ENCODE measurements at regions of chr12 and their contacts with region 1.

Region 1: DNA sequence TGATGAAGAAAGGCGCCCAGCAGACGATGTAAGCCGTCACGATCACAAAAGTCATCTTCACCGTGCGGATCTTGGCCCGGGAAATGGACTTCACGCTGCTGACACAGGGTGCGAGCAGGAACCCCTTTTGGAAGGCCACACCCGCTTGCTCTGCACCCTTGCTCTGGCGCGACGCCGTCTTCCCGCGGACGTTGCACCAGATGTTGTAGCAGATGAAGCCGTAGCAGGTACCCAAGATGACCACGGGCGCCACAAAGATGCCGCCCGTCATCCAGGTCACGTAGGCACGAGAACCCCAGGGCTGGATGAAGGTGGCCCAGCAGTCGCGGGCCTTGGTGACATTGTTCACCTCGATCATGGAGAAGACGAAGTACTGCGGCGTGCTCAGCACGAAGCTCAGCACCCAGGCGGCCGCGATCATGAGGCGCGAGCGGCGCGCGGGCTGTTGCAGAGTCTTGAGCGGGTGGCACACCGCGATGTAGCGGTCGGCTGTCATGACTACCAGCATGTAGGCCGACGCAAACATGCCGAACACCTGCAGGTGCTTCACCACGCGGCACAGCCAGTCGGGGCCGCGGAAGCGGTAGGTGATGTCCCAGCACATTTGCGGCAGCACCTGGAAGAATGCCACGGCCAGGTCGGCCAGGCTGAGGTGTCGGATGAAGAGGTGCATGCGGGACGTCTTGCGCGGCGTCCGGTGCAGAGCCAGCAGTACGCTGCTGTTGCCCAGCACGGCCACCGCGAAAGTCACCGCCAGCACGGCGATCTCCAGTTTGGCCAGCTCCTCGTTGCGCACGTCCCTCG is 890 bp downstream of the AVPR1A start:
- DNase-seq: no peak
- H3K4me3 Mint-ChIP-seq: peak overlapping the region; percentile 23
- H3K27ac Mint-ChIP-seq: peak overlapping the region; percentile 83
- H3K4me1 Mint-ChIP-seq: no peaks in the 10 kb centered on the region
- H3K27me3 Mint-ChIP-seq: peaks cover 52% of the 10 kb centered on the region

Region 2: GRCh38 chr12:62934799-62935674 is 215.1 kb before region 1 on chr12 and contains the start of gene PPM1H:
- intact Hi-C with region 1: loop called (anchors 5 kb)
- DNase-seq: peak; percentile 3
- H3K4me3 Mint-ChIP-seq: peak within 1 kb of the TSS; percentile 80
- H3K27ac Mint-ChIP-seq: no peak within 1 kb of the TSS
- H3K4me1 Mint-ChIP-seq: peaks cover 15% of the 10 kb centered on the region
- H3K27me3 Mint-ChIP-seq: peaks cover 59% of the 10 kb centered on the region
- total RNA-seq, gene PPM1H: not detected in 2 replicates